Activated naive CD4-positive, alpha-beta T cell treated with anti-CD3 and anti-CD28 coated beads for 36 hours (primary cell): ENCODE measurements at regions of chr5 and their contacts with region 1.

Region 1: DNA sequence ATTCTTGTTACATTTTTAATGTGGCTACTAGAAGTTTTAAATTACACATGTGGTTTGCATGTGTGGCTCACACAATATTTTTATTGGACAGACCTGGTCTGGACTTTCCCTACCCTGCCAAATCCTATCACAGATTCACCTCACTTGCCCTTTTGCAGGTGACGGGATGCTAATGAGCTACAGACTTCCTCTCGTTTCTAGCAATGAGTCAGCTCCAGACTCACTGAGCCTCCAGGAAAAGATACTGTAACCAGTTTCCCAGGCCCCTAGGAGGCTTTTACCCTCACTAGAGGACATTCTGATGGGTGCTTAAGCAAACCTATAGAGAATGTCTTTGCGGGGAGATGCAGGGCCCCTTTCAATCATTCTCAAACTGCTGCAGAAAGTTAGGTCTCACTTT is 135.4 kb downstream of the WDR41 start:
- DNase-seq: peak; percentile 84
- H3K4me3 Mint-ChIP-seq: no peak overlapping the region
- H3K27ac Mint-ChIP-seq: peak overlapping the region; percentile 76
- H3K4me1 Mint-ChIP-seq: peaks cover 23% of the 10 kb centered on the region
- H3K27me3 Mint-ChIP-seq: peaks cover 3% of the 10 kb centered on the region

Region 2: DNA sequence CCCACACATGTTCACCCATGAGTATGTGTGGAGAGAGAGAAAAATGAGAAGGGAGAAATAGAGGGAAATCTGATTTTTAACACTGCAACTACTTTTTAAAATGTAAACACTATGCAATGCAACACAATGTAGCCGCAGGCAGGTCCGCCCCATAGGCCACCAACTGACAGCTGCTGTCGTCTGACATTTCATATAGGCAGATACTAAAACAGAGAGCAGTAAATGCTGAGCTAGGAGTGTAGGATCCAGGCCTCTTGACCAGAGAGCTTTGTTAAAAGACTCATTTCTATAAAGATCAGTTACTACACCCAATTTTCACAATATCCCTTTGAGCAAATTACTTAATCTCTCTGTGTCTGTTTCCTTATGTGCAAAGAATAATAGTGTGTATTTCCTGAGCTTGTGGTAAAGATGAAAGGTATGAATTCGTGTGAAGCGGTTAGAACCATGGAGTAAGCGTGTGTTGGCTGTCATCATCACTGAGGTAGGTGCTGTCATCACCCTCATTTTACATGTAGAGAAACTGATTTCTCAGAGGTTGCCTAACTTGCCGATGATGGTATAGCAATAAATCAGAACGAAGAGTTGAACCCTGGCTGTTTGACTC is 201.5 kb before region 1 on chr5:
- CTCF ChIA-PET with region 1: no interaction called
- intact Hi-C with region 1: loop called (anchors 1 kb)
- DNase-seq: peak; percentile 66
- H3K4me3 Mint-ChIP-seq: no peak overlapping the region
- H3K27ac Mint-ChIP-seq: peak overlapping the region; percentile 60
- H3K4me1 Mint-ChIP-seq: peaks cover 27% of the 10 kb centered on the region
- H3K27me3 Mint-ChIP-seq: no peaks in the 10 kb centered on the region

Region 3: DNA sequence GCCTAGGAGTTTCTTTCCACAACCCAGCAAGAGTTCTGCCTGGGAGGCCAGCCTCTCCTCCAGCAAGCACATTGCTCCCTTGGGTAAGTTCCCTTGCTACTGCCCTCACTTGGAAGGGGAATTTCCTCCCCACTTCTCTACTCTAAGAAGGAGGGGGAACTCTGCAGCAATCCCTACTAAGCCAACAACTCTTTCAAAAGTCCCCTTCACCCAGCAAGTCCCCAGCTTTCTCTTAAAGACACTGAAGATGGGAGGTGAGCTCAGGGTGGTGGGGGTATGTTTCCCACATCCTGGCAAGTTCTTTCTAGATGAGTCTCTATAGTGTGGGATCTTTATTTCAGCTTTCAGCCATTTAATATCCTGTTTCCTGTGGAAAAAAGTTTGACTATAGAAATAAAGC is 97.3 kb before region 1 on chr5:
- CTCF ChIA-PET with region 1: no interaction called
- intact Hi-C with region 1: no loop called
- DNase-seq: peak; percentile 29
- H3K4me3 Mint-ChIP-seq: no peak overlapping the region
- H3K27ac Mint-ChIP-seq: no peak overlapping the region
- H3K4me1 Mint-ChIP-seq: peaks cover 7% of the 10 kb centered on the region
- H3K27me3 Mint-ChIP-seq: peaks cover 18% of the 10 kb centered on the region

Region 4: DNA sequence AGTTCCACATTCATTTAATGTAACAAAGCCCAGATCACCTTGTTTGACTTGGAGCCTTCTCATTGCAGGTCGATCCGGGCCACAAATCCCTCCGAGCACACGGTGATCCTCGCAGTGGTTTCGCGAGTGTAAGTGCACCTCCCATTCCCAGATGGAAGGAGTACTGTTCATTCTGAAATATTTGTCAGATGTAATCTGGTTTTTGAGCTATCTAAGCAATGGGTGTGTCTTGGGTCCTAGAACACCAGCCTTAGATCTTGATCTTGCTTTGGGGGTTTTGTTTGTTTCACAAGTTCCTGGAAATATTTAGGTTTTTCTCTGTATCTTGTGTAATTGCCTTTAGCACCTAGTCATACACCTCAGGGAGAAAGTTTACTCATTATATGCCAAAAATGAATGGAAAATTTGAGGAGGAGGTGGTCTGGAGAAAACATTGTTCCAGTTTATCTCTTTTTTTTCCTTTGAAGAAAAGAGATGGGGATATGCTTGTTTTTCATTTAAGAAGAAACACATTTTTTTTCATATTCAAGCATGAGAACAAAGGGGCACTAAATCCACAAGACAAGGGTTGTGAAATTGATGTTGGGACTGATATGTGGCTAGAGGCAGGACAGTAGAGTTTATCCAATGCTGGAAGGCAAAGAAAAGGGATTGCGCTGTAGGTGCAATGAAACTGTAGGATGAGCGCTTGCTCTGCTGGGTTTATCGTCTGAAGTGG is 27.7 kb before region 1 on chr5:
- CTCF ChIA-PET with region 1: no interaction called
- intact Hi-C with region 1: loop called (anchors 1 kb)
- DNase-seq: no peak
- H3K4me3 Mint-ChIP-seq: no peak overlapping the region
- H3K27ac Mint-ChIP-seq: peak overlapping the region; percentile 66
- H3K4me1 Mint-ChIP-seq: peaks cover 24% of the 10 kb centered on the region
- H3K27me3 Mint-ChIP-seq: peaks cover 4% of the 10 kb centered on the region

Region 5: DNA sequence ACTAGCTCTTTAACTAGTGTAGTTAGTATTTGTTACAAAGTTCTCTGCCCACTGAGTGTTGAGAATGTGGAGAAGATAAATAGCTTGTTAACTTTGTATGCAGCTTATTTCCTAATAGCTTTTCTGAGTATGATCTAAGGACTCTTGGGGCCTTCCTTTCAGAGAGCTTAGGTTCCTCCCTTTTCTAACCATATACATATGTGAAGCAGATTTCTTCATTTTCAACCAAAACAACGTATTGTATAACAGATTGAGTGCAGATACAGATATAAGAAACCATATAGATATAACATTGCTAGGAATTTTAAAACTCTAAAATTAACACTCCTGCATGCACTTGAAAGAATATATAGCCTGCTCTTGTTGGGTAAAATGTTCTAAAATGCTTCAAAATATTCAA is 1074.1 kb after region 1 on chr5:
- CTCF ChIA-PET with region 1: no interaction called
- intact Hi-C with region 1: no loop called
- DNase-seq: no peak
- H3K4me3 Mint-ChIP-seq: no peak overlapping the region
- H3K27ac Mint-ChIP-seq: no peak overlapping the region
- H3K4me1 Mint-ChIP-seq: no peaks in the 10 kb centered on the region
- H3K27me3 Mint-ChIP-seq: no peaks in the 10 kb centered on the region